ENCODE measurements at regions of chr9 and their contacts with region 1.

Region 1: GRCh38 chr9:105447814-105448812 is at the start of gene FSD1L:
- DNase-seq: peak; percentile 85 to 97 (median 94)
- H3K4me3 ChIP-seq: peak within 1 kb of the TSS; percentile 52 to 95 (median 81)
- H3K27ac ChIP-seq: peak within 1 kb of the TSS; percentile 57 to 96 (median 90)
- H3K27me3 ChIP-seq: no peaks in the 10 kb centered on the region
- CTCF ChIP-seq: peak in 54 of 56 donors; percentile 16 to 77 (median 56)
- total RNA-seq, gene FSD1L: 20.3 to 54.9 (median 37.0) TPM

Region 2: GRCh38 chr9:105405514-105406131 is 42.5 kb before region 1 on chr9:
- intact Hi-C with region 1: no loop called
- DNase-seq: no peak
- H3K4me3 ChIP-seq: no peak overlapping the region
- H3K27ac ChIP-seq: peak overlapping the region in 4 of 59 donors; percentile 1 to 52 (median 12)
- H3K27me3 ChIP-seq: no peaks in the 10 kb centered on the region
- CTCF ChIP-seq: no peak

Region 3: GRCh38 chr9:105557771-105558610 is 109.9 kb after region 1 on chr9 and contains the start of gene FKTN:
- intact Hi-C with region 1: loop called in 1 of 2 experiments (anchors 10 kb)
- DNase-seq: peak; percentile 76 to 92 (median 88)
- H3K4me3 ChIP-seq: peak within 1 kb of the TSS; percentile 60 to 99 (median 89)
- H3K27ac ChIP-seq: peak within 1 kb of the TSS in 44 of 59 donors; percentile 5 to 83 (median 58)
- H3K27me3 ChIP-seq: no peaks in the 10 kb centered on the region
- CTCF ChIP-seq: peak in 22 of 56 donors; percentile 12 to 39 (median 21)
- total RNA-seq, gene FKTN: 11.7 to 38.4 (median 22.1) TPM

Region 4: GRCh38 chr9:105722099-105722498 is 274.0 kb after region 1 on chr9:
- intact Hi-C with region 1: no loop called
- DNase-seq: no peak
- H3K4me3 ChIP-seq: no peak overlapping the region
- H3K27ac ChIP-seq: no peak overlapping the region
- H3K27me3 ChIP-seq: no peaks in the 10 kb centered on the region
- CTCF ChIP-seq: no peak